ENCODE measurements at regions of chr17 and their contacts with region 1.

Region 1: GRCh38 chr17:28951991-28952975 is 965 bp upstream of the PHF12 start:
- DNase-seq: peak; percentile 85 to 99 (median 97)
- ATAC-seq: peak; percentile 71 to 77
- H3K4me3 Mint-ChIP-seq: no peak overlapping the region
- H3K27ac Mint-ChIP-seq: no peak overlapping the region
- H3K4me1 Mint-ChIP-seq: peaks cover 12 to 18% (median 16%) of the 10 kb centered on the region in 4 donors
- H3K27me3 Mint-ChIP-seq: no peaks in the 10 kb centered on the region

Region 2: DNA sequence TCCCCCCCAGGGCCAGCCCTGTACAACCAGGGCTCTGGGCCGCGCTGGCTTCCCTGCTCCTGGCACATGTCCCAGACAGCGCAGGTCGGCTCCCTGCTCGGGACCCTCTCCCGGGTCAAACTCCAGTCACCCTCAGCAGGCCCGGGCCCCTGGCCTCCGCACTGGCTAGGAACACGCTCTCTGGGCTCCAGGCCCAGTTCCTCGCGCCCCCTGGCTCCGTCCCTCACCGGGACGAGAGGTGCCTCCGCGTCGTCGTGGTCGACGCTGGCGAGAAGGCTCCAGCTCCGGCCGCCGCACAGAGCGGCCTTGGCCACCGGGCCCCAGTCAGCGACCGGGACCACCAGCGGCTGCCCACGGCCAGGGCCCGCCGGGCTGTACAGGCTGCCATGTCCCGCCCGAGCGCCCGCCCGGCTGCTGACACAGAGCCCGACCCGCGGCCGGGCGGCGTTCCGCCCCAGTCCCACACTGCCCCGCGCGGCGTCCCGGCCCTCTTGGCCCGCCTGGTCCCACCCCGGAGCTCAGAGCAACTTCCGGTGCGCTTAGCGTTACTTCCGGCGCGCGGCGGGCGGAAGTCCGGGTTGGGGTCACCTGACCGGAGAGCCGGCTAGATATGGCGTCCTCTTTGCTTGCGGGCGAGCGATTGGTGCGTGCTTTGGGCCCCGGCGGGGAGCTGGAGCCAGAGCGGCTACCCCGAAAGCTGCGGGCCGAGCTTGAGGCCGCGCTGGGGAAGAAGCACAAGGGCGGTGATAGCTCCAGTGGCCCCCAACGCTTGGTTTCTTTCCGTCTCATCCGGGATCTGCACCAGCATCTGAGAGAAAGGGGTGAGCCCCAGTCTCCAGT is 595.0 kb before region 1 on chr17 and contains the start of gene POLDIP2:
- POLR2A ChIA-PET with region 1: interaction called, 13 read pairs
- DNase-seq: peak; percentile 92 to 97 (median 96)
- ATAC-seq: peak; percentile 97 to 98
- H3K4me3 Mint-ChIP-seq: peak within 1 kb of the TSS; percentile 89 to 96 (median 93)
- H3K27ac Mint-ChIP-seq: peak within 1 kb of the TSS; percentile 91 to 97 (median 96)
- H3K4me1 Mint-ChIP-seq: peaks cover 19 to 33% (median 26%) of the 10 kb centered on the region in 4 donors
- H3K27me3 Mint-ChIP-seq: no peaks in the 10 kb centered on the region
- polyA plus RNA-seq, gene POLDIP2: 81.3 to 90.3 (median 85.6) TPM

Region 3: DNA sequence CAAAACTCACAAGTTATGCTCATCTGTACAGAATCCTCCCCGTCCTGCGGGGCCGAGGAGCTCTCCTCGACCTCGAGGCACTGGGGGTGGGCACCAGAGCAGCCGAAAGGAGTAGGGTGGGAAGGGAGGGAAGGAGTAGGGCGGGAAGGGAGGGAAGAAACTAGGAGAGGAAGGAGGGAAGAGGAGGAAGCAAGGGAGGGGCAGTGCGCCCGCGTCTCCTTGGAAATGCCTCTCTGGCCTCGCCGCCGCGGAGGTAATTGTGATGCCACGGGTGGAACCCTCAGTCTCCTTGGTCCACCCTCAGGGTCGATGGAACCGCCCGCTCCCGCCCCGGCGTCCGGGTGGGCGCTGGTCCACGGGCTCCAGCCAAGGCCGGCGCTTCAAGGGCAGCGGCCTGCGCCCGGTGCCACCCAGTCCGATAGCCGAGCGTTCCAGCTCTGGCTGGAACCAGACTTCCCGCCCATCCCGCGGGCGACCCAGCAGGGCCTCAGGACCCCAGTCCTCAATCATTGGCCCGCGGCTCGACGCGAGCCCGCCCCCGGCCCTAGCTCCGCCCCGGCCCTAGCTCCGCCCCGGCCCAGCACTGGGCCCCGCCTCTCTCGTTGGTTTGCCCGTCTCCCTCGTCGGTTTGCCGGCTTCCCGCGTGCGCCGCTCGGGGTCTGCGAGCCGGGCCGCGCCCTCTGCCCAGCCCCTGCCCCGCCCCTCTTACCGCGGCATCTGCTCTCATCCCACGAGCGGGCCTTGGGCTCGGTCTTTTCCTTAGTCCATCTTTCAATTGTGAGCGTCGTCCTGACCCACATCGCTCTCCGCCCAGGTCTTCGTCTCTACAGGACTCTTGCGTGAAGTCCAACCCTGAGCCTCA is 241.2 kb before region 1 on chr17:
- POLR2A ChIA-PET with region 1: interaction called, 29 read pairs
- DNase-seq: peak; percentile 82 to 92 (median 88)
- ATAC-seq: peak; percentile 88 to 89
- H3K4me3 Mint-ChIP-seq: peak overlapping the region; percentile 84 to 95 (median 92)
- H3K27ac Mint-ChIP-seq: peak overlapping the region; percentile 85 to 97 (median 95)
- H3K4me1 Mint-ChIP-seq: peaks cover 3 to 20% (median 15%) of the 10 kb centered on the region in 4 donors
- H3K27me3 Mint-ChIP-seq: peaks cover 0 to 18% (median 10%) of the 10 kb centered on the region in 5 donors

Region 4: DNA sequence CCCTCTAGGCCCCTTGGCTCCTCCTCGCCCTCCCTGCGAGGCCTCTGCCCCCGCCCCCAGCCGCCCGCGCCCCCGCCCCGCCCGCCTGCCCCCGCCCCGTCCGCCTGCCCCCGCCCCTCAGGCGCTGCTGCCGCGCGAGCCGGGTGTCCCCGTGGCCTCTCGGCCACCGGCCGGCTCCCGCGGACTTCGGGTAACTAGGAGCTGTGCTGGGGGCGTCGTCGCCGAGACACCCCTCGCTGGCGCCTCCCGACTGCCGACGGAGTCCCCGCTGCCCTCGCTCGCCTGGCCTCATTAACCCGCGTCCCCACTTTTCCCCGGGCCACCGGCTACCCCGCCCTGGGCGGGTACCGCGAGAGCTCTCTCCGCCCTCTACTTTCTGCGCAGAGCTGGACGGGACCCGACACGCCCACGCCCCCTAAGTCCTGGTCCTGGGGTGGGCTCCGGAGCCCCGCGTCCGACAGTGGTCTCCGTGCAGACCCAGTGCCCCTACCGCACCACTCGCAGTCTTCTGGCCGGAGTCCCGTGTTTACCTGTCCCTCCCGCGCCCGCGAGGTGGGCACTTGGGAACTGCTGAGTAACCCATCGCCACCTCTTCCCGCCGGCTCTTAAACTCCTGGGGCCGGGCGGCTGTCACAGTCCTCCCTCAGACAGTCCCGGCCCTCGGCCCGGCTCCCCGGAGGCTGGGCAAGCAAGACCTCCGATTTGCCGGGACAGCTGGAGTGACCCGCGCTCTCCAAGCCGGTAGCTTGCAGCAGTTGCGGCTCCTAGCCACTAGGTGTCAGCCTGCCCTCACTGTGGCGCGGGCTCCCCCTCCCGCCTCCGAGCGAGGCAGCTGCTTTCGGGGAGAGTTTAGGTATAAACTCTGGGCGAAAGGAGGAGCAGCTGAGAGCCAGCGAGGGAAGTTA is 225.8 kb before region 1 on chr17 and contains the start of gene TLCD1:
- POLR2A ChIA-PET with region 1: interaction called, 112 read pairs
- DNase-seq: peak; percentile 82 to 93 (median 88)
- ATAC-seq: peak; percentile 37 to 44
- H3K4me3 Mint-ChIP-seq: peak within 1 kb of the TSS; percentile 95 to 100 (median 98)
- H3K27ac Mint-ChIP-seq: peak within 1 kb of the TSS; percentile 82 to 100 (median 99)
- H3K4me1 Mint-ChIP-seq: peaks cover 16 to 66% (median 54%) of the 10 kb centered on the region in 4 donors
- H3K27me3 Mint-ChIP-seq: no peaks in the 10 kb centered on the region
- polyA plus RNA-seq, gene TLCD1: 0.22 TPM in 1 of 3 donors, not detected in the others

Region 5: DNA sequence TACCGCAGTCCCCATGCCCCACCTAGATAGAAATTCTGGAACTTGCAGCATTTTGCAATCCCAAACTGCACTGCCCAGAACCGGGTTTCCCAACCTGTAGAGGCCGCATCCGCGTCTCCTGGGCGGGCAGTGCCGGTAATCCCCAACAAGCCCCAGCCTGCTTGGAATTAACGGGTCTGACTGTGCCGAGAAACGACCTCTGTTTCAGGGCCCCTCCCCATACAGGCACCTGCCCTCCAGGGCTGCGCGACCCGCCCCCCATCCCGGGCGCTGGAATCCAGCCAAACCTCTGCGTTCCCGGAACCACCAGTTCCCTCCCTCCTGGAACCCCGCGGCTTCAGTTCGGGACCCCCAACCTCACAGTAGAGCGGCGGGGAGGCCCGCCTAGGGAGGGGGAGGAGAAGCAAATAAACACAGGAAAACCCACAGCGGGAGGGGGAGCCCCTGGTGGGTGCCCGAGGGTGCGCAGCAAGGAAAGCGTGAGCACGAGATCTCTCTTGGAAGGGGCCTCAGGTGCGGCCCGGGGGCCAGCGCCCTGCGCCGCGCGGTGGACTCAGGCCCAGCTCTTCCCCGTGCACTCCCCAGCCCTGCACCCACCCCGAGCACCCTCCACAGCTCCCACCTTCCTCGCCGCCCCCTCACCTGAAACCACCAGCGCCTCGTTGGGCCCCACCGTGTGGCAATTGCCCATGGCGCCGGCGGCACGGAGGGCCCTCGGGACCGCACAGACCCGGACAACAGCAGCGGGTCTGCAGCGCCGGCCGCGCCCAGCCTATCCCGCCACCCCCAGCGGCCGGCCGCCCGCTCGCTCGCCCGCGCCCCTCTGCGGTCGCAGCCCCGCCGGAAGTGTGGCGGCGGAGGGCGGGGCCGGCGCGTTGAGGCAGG is 55.2 kb before region 1 on chr17 and contains the start of gene FLOT2:
- POLR2A ChIA-PET with region 1: interaction called, 64 read pairs
- DNase-seq: peak; percentile 56 to 84 (median 67)
- ATAC-seq: peak; percentile 76 to 83
- H3K4me3 Mint-ChIP-seq: peak within 1 kb of the TSS; percentile 91 to 99 (median 98)
- H3K27ac Mint-ChIP-seq: peak within 1 kb of the TSS; percentile 95 to 99 (median 97)
- H3K4me1 Mint-ChIP-seq: peaks cover 47 to 75% (median 72%) of the 10 kb centered on the region in 4 donors
- H3K27me3 Mint-ChIP-seq: no peaks in the 10 kb centered on the region
- polyA plus RNA-seq, gene FLOT2: 230 to 253 (median 237) TPM

Region 6: DNA sequence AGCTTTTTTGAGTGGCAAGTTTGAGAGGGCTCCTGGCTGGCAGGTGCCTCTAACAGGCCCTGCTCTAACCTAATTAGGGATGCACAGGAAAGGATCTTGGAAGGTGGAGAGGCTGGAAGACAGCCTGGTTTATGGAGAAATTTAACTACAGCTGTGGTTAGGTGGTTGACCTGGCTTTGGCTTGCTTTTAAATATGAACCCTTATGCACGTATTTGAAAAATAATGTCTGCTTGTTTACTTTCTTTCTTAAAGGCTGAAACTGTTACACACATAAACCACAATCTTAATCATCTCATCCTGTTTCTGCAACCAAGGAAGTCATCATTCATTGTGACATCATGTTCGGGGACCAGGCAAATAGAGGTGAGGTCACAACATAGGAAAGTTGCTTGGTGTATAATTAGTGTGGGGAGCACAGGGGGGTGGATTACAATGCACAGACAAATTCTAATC is 26.3 kb before region 1 on chr17:
- POLR2A ChIA-PET with region 1: interaction called, 82 read pairs
- DNase-seq: peak in 9 of 10 donors; percentile 27 to 88 (median 78)
- ATAC-seq: peak; percentile 87 to 95
- H3K4me3 Mint-ChIP-seq: peak overlapping the region; percentile 29 to 71 (median 66)
- H3K27ac Mint-ChIP-seq: peak overlapping the region; percentile 92 to 99 (median 96)
- H3K4me1 Mint-ChIP-seq: peaks cover 24 to 71% (median 56%) of the 10 kb centered on the region in 4 donors
- H3K27me3 Mint-ChIP-seq: no peaks in the 10 kb centered on the region

Region 7: DNA sequence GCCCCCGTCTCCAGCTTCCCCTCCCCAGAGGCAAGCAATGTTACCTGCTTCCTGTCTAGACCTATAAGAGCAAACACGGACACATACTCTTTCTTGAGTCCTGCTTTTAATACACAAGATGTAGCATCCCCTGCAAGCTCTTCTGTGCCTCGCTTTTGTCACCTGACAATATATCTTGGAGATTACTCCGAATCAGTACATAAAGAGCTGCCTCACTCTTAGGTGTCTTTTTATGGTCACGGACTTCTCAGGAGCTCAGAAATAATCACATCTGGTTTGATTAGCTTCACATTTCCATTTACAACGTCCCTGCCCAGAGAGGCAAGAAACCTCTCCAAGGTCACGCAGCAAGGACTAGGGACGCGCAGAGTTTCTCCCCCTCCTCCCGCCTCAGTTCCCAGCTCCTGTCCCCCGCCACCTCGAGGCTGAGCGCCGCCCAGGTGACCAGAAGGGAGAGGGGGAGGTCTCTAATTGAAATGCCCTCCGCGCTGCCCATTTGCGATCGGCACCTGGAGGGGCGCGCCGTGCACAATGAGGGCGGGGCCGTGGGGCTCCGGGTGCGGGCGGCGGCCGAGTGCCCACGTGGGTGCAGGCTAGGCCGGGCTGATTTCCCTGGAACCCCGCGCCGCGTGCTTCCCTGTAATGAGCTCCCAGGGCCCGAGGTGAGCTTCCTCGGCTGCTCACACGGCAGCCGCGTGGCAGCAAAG is 67.3 kb after region 1 on chr17:
- POLR2A ChIA-PET with region 1: no interaction called
- DNase-seq: no peak
- ATAC-seq: peak in 1 of 2 donors; percentile 36
- H3K4me3 Mint-ChIP-seq: peak overlapping the region in 7 of 10 donors; percentile 10 to 63 (median 42)
- H3K27ac Mint-ChIP-seq: no peak overlapping the region
- H3K4me1 Mint-ChIP-seq: peaks cover 6 to 9% (median 8%) of the 10 kb centered on the region in 4 donors
- H3K27me3 Mint-ChIP-seq: peaks cover 22 to 73% (median 57%) of the 10 kb centered on the region in 5 donors

Region 8: DNA sequence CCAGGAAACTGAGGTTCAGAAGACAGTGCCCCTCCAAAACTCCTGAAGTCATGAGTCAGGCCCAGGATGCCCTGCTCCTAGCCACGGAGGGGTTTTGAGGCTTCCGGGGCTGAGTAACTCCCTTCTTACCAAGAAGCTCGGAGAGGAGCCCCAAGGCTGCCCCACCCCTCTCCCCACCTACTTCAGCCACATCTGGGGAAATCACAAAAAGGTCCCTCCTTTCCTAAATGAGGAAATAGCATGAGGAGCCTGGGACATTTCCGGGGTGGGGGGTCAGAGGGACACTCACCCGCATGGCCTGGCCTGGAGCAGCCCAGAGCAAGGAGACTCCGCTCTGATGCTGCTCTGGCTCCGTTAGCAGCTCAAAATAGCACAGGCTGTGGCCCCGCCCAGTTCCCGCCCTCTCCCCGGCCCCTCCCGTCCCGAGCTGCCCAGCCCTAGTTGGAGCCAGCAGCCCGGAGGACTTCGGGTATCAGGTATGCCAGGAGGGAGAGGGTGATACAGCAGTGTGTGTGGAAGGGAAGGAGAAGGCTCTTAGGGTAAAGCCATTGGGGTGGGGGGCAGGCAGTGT is 187.9 kb after region 1 on chr17:
- POLR2A ChIA-PET with region 1: interaction called, 12 read pairs
- DNase-seq: peak; percentile 51 to 87 (median 68)
- ATAC-seq: peak; percentile 61 to 72
- H3K4me3 Mint-ChIP-seq: peak overlapping the region; percentile 85 to 95 (median 92)
- H3K27ac Mint-ChIP-seq: peak overlapping the region; percentile 87 to 100 (median 98)
- H3K4me1 Mint-ChIP-seq: peaks cover 35 to 84% (median 65%) of the 10 kb centered on the region in 4 donors
- H3K27me3 Mint-ChIP-seq: no peaks in the 10 kb centered on the region